Activated CD4-positive, alpha-beta T cell treated with anti-CD3 and anti-CD28 coated beads, Interleukin-2, amount 10 ng/mL, durations not matched to agents 24 days and 14 days (primary cell): ENCODE measurements at regions of chr12 and their contacts with region 1.

Region 1: GRCh38 chr12:75977952-75978671 is 53.5 kb downstream of the PHLDA1 start:
- DNase-seq: peak; percentile 94
- H3K4me3 Mint-ChIP-seq: peak overlapping the region; percentile 69
- H3K27ac Mint-ChIP-seq: peak overlapping the region; percentile 100
- H3K4me1 Mint-ChIP-seq: peaks cover 54% of the 10 kb centered on the region
- H3K27me3 Mint-ChIP-seq: no peaks in the 10 kb centered on the region

Region 2: GRCh38 chr12:75390899-75391538 is 587.1 kb before region 1 on chr12 and contains the start of gene GLIPR1L2:
- intact Hi-C with region 1: loop called (anchors 1 kb)
- DNase-seq: peak; percentile 95
- H3K4me3 Mint-ChIP-seq: peak within 1 kb of the TSS; percentile 94
- H3K27ac Mint-ChIP-seq: peak within 1 kb of the TSS; percentile 92
- H3K4me1 Mint-ChIP-seq: peaks cover 27% of the 10 kb centered on the region
- H3K27me3 Mint-ChIP-seq: peaks cover 3% of the 10 kb centered on the region
- total RNA-seq, gene GLIPR1L2: 0.36 TPM in 1 of 2 replicates, not detected in the other

Region 3: GRCh38 chr12:75560167-75560566 is 417.9 kb before region 1 on chr12:
- intact Hi-C with region 1: no loop called
- DNase-seq: no peak
- H3K4me3 Mint-ChIP-seq: no peak overlapping the region
- H3K27ac Mint-ChIP-seq: no peak overlapping the region
- H3K4me1 Mint-ChIP-seq: no peaks in the 10 kb centered on the region
- H3K27me3 Mint-ChIP-seq: peaks cover 30% of the 10 kb centered on the region

Region 4: GRCh38 chr12:75641031-75641780 is 336.9 kb before region 1 on chr12:
- intact Hi-C with region 1: loop called (anchors 1 kb)
- DNase-seq: peak; percentile 78
- H3K4me3 Mint-ChIP-seq: peak overlapping the region; percentile 1
- H3K27ac Mint-ChIP-seq: peak overlapping the region; percentile 79
- H3K4me1 Mint-ChIP-seq: peaks cover 31% of the 10 kb centered on the region
- H3K27me3 Mint-ChIP-seq: no peaks in the 10 kb centered on the region

Region 5: DNA sequence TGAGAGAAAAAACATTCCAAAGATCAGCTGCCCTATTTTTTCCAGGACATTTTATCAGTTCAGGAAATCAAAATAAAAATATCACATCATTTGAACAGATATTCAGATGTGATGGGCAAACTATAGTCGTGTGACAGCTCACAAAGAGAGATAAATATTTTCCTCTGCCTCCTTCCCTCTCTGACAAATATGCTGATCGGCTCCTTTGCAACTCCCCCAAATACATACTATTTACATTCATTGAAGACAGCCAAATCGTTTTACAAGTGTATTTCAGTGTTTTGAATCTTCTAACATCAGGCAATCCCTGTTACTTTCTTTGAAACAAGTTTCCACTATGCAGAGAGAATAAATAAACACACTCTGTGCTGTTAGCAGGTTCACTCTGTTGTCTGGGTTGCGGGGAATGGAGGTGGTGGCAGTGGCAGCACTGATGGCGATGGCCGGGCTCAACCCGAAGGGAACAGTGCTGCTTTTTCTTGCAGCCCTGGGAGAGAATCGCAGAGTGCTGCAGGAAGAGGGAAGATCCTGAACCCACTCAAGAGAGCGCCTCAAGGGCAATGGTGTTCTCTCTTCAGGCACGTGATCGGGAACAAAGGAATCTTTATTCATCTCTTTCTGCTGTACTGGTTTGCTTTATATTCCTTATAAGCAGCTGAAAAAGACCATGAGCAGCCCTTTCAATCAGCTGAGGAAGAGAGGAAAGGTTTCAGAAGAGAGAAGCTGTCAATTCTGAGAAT is 89.1 kb before region 1 on chr12:
- intact Hi-C with region 1: no loop called
- DNase-seq: no peak
- H3K4me3 Mint-ChIP-seq: no peak overlapping the region
- H3K27ac Mint-ChIP-seq: no peak overlapping the region
- H3K4me1 Mint-ChIP-seq: peaks cover 8% of the 10 kb centered on the region
- H3K27me3 Mint-ChIP-seq: peaks cover 29% of the 10 kb centered on the region

Region 6: DNA sequence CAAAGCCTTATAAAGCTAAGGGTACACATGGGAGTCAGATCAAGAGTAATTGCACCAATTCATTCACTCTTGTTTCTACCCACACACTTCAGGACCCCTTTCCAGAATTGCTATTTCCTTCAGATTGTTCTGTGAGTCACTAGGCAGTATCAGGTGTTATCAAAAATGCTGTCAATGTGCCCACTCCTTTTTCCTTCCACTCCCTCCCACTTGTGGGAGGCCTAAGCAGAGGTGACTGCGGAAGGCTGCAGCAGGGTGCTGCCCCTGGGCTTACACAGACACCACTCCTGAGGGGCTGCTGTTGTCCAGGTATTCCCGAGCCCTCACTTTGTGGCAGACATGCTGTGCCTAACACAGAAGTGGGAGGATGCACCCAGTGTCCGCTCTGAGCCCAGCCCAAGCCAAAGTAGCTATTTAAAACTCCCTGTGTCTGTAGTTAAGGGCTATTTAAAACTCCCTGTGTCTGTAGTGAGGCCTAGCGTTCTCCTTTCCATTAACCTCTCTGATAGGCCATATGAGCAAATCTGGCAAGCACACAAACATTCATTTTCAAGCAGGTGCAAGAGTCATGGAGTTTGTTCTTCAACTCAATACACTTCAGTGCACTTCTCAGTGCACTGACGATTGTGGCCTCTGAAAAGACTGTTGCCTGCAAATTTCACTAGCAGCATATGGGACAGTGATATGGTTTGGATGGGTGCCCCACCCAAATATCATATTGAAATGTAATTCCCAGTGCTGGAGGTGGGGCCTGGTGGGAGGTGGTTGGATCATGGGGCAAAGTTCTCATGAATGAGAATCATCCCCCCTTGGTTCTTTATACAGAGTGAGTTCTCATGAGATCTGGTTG is 64.4 kb before region 1 on chr12:
- intact Hi-C with region 1: loop called (anchors 1 kb)
- DNase-seq: peak; percentile 63
- H3K4me3 Mint-ChIP-seq: no peak overlapping the region
- H3K27ac Mint-ChIP-seq: peak overlapping the region; percentile 65
- H3K4me1 Mint-ChIP-seq: peaks cover 25% of the 10 kb centered on the region
- H3K27me3 Mint-ChIP-seq: peaks cover 3% of the 10 kb centered on the region

Region 7: GRCh38 chr12:75944097-75944904 is 33.8 kb before region 1 on chr12:
- intact Hi-C with region 1: loop called (anchors 1 kb)
- DNase-seq: peak; percentile 77
- H3K4me3 Mint-ChIP-seq: peak overlapping the region; percentile 67
- H3K27ac Mint-ChIP-seq: peak overlapping the region; percentile 99
- H3K4me1 Mint-ChIP-seq: peaks cover 32% of the 10 kb centered on the region
- H3K27me3 Mint-ChIP-seq: no peaks in the 10 kb centered on the region

Region 8: DNA sequence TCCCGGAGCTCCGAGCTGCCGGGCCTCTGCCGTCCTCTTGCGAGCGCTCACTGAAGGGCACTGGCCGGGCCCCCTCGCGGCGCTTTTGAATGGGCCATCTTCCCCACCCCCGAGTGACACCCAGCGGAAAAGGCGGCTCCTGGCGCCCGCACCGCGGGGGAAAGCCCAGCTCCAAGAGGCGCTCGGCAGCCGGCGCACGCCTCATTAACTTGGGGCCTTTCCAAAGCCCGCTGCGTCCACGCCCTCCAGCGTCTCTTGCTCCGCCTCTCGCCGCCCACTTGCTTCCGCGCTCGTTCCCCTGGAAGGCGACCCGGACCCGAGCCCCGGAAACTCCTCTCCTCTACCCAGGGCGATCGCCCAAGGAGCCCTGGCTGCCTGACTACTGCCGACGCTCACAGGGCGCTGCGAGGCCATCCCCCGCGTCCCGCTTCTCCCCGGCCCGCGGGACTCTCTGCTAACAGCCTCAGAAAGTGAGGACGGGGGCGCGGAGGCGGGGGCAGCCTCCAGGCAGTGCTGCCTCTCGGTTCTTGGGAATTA is 53.5 kb after region 1 on chr12 and contains the start of gene PHLDA1:
- intact Hi-C with region 1: loop called (anchors 1 kb)
- DNase-seq: peak; percentile 98
- H3K4me3 Mint-ChIP-seq: peak within 1 kb of the TSS; percentile 99
- H3K27ac Mint-ChIP-seq: peak within 1 kb of the TSS; percentile 99
- H3K4me1 Mint-ChIP-seq: peaks cover 35% of the 10 kb centered on the region
- H3K27me3 Mint-ChIP-seq: peaks cover 2% of the 10 kb centered on the region
- total RNA-seq, gene PHLDA1: 59.6 and 60.7 TPM in 2 replicates